Activated CD8-positive, alpha-beta T cell treated with anti-CD3 and anti-CD28 coated beads, Interleukin-2, amount 10 ng/mL, durations not matched to agents 7 days and 5 days (primary cell): ENCODE measurements at regions of chr5 and their contacts with region 1.

Region 1: DNA sequence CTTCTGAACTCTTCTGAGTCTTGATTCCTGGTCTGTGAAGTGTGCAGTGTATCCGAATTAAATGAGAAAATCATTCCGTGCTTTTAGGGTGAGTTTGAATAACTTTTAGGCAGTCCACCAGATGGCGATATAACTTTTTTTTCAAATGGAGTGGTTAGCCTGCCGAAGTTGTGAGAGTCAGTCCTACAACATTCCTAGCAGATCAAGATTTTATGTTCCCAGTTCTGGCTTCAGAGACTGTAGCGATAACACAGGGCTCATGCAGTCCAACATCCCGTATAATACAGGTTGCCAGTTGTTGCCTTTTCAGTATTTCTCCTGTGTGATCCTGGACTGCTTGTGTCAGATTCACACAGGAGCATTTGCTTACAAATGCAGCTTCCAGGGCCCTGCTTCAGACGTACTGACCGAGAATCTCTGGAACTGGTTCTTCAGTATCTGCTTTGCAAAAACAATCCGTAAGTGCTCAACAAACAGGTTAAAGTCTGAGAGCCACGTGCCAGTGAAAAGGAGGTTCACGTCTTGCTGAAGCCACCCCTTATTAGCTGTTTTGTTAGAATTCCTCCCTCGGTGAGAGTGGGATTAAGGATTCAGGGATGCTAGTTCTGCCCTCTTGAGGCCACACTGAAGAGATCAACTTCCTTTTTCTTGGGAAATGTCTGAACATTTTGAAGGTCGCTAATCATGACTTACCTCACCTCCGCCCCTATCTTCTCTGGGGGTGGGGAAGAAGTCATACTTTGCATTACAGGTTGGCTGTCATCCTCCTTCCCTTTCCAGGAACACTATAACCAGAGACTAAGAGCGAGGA is 22.8 kb downstream of the SMIM3 start:
- DNase-seq: no peak
- ATAC-seq: peak; percentile 53
- H3K4me3 Mint-ChIP-seq: no peak overlapping the region
- H3K27ac Mint-ChIP-seq: no peak overlapping the region
- H3K4me1 Mint-ChIP-seq: peaks cover 9% of the 10 kb centered on the region
- H3K27me3 Mint-ChIP-seq: peaks cover 3% of the 10 kb centered on the region

Region 2: GRCh38 chr5:150764530-150764929 is 36.8 kb before region 1 on chr5:
- CTCF ChIA-PET with region 1: no interaction called
- POLR2A ChIA-PET with region 1: no interaction called
- DNase-seq: no peak
- ATAC-seq: no peak
- H3K4me3 Mint-ChIP-seq: no peak overlapping the region
- H3K27ac Mint-ChIP-seq: no peak overlapping the region
- H3K4me1 Mint-ChIP-seq: peaks cover 21% of the 10 kb centered on the region
- H3K27me3 Mint-ChIP-seq: peaks cover 2% of the 10 kb centered on the region

Region 3: GRCh38 chr5:150789943-150790611 is 11.2 kb before region 1 on chr5:
- CTCF ChIA-PET with region 1: interaction called, 39 read pairs
- POLR2A ChIA-PET with region 1: interaction called, 3 read pairs
- DNase-seq: peak; percentile 78
- ATAC-seq: peak; percentile 98
- H3K4me3 Mint-ChIP-seq: peak overlapping the region; percentile 54
- H3K27ac Mint-ChIP-seq: peak overlapping the region; percentile 86
- H3K4me1 Mint-ChIP-seq: peaks cover 50% of the 10 kb centered on the region
- H3K27me3 Mint-ChIP-seq: no peaks in the 10 kb centered on the region

Region 4: DNA sequence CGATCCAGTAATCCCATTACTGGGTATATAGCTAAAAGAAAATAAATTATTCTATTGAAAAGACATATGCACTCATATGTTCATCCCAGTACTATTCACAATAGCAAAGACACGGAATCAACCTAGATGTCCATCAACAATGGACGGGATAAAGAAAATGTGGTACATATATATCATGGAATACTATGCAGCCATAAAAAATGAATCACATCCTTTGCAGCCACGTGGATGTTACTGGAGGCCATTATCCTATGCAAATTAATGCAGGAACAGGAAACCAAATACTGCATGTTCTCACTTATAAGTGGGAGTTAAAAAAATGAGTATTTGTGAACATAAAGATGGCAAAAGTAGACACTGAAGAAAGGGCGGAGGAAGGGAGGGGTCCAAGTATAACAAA is 28.4 kb after region 1 on chr5:
- CTCF ChIA-PET with region 1: no interaction called
- POLR2A ChIA-PET with region 1: no interaction called
- DNase-seq: no peak
- ATAC-seq: no peak
- H3K4me3 Mint-ChIP-seq: no peak overlapping the region
- H3K27ac Mint-ChIP-seq: no peak overlapping the region
- H3K4me1 Mint-ChIP-seq: no peaks in the 10 kb centered on the region
- H3K27me3 Mint-ChIP-seq: peaks cover 10% of the 10 kb centered on the region